ENCODE measurements at regions of chr6 and their contacts with region 1.

Region 1: DNA sequence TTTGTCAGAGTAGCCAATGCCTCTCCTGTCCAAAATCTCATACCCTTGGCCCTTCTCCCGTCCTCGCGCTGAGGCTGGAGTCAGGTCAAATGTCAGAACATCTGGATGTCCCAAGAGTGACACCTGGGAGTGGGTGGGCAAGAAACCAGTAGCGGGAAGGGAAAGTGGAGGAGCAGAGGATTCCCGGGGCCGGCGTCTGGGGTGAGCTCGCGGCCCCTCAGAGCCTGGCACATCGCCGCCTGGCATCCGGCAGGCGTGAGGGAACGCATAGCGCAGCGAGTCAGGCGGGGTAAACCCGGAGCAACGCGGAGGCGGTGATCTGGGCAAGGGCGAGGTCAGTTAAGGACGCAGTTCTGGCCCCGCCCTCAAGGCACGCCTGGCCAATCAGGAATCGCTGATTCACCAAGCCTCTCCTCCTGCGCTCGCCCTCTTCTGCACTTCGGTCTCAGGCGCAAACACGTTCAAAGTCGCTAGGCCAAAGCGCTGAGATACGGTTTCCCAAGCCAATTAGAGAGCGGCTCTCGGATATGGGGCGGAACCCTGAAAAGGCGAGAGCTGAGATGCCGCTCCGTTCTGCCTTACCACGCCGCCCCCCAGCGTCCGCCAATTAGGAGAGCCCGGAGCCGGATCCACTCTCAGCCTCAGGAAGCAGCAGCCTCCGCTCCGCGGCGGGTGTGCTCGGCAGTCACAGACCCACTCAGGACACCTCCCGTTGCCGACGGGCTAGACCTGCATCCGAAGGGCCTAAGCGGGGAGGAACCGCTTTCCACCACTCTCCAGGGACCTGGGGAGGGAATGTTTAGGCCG is 22.5 kb downstream of the VPS52 start:
- DNase-seq: peak; percentile 99
- H3K4me3 ChIP-seq: peak overlapping the region; percentile 35 to 60 (median 50)
- H3K27ac ChIP-seq: peak overlapping the region; percentile 88 to 93 (median 92)
- H3K4me1 ChIP-seq: peaks cover 12 to 27% (median 24%) of the 10 kb centered on the region in 4 donors
- H3K27me3 ChIP-seq: peaks cover 4% of the 10 kb centered on the region
- CTCF ChIP-seq: no peak
- EP300 ChIP-seq: no peak
- POLR2A ChIP-seq: peak; percentile 87

Region 2: DNA sequence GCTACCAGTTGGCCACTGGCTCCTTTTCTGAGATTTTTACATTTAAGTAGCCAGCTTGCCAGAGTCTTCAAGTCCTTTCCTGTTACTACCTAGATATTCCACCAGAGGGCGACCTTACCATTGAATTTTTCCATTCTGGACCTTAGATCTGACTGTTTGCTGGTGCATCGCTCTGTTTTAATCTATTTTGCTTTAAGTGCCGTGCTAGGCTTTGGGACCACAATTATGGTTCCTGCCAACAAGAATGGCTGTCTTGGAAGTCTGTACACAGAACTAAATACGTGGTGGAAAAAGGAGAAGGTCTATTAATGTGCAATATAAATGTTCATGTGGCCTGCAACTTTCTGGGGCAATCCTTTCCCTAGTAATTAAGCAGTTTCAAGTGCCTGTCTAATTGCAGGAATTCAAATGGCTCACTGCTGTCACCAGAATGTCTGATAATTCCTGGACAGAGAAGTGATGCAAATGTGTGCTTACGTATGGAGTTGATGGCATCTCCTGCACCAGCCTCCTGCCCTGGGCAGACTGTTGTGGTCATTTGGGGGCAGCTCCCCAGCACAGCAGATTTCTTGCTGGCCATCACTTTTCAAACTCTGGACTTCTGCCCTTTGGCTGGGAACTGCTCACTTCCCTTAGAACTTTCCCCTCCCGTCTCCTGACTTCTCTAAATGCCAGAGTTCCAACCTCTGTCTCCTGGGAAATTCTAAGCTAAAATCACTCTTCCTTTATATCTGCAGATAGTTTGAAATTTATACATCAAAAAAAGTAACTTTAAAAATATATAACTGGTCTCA is 234.1 kb before region 1 on chr6:
- in situ Hi-C with region 1: loop called (anchors 5 to 25 kb)
- intact Hi-C with region 1: loop called (anchors 10 kb)
- DNase-seq: peak; percentile 37
- H3K4me3 ChIP-seq: no peak overlapping the region
- H3K27ac ChIP-seq: no peak overlapping the region
- H3K4me1 ChIP-seq: peaks cover 0 to 24% (median 12%) of the 10 kb centered on the region in 4 donors
- H3K27me3 ChIP-seq: peaks cover 42% of the 10 kb centered on the region
- CTCF ChIP-seq: peak; percentile 77 to 89 (median 84)
- EP300 ChIP-seq: no peak
- POLR2A ChIP-seq: no peak

Region 3: GRCh38 chr6:33112148-33112547 is 137.0 kb before region 1 on chr6:
- in situ Hi-C with region 1: loop called in 1 of 4 experiments (anchors 25 kb)
- intact Hi-C with region 1: no loop called
- DNase-seq: no peak
- H3K4me3 ChIP-seq: no peak overlapping the region
- H3K27ac ChIP-seq: no peak overlapping the region
- H3K4me1 ChIP-seq: peaks cover 0 to 4% (median 2%) of the 10 kb centered on the region in 4 donors
- H3K27me3 ChIP-seq: peaks cover 68% of the 10 kb centered on the region
- CTCF ChIP-seq: no peak
- EP300 ChIP-seq: no peak
- POLR2A ChIP-seq: no peak

Region 4: DNA sequence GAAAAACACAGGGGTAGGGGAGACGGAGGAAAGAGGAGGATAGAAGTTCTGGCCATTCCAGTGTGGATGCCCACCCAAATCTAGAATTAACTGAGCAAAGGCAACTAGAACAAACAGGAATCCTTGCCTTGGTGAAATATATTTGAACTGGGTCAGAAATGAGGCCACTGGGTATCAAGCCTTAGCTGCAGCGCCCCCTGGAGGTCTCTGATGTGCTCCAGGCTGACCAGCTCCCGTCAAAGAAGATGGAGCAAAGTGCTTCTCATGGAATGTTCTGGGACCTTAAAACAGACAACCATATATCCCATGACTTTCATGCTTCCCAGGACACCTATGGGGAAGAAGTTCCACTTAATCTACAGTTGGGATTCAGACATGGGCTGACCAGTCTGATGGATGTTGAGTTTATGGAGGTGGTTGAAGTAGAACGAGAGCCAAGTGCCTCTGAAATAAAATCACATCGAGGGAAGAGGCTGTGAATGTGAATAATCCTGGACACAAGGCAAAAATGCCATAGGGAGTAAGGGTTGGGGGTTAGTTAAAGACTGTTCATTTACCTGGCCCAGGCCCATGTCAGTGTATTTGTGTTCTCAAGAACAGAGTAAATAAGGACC is 122.9 kb before region 1 on chr6:
- in situ Hi-C with region 1: loop called in 1 of 4 experiments (anchors 25 kb)
- intact Hi-C with region 1: loop called (anchors 5 kb)
- DNase-seq: peak; percentile 66
- H3K4me3 ChIP-seq: no peak overlapping the region
- H3K27ac ChIP-seq: no peak overlapping the region
- H3K4me1 ChIP-seq: no peaks in the 10 kb centered on the region
- H3K27me3 ChIP-seq: no peaks in the 10 kb centered on the region
- CTCF ChIP-seq: peak; percentile 31 to 67 (median 54)
- EP300 ChIP-seq: no peak
- POLR2A ChIP-seq: no peak

Region 5: GRCh38 chr6:33161354-33162331 is 87.5 kb before region 1 on chr6:
- in situ Hi-C with region 1: loop called in 2 of 4 experiments (anchors 10 kb)
- intact Hi-C with region 1: loop called (anchors 10 kb)
- DNase-seq: peak; percentile 85
- H3K4me3 ChIP-seq: peak overlapping the region; percentile 34 to 53 (median 38)
- H3K27ac ChIP-seq: peak overlapping the region; percentile 58 to 82 (median 74)
- H3K4me1 ChIP-seq: peaks cover 4 to 17% (median 15%) of the 10 kb centered on the region in 4 donors
- H3K27me3 ChIP-seq: no peaks in the 10 kb centered on the region
- CTCF ChIP-seq: peak; percentile 94 to 96 (median 94)
- EP300 ChIP-seq: no peak
- POLR2A ChIP-seq: no peak

Region 6: DNA sequence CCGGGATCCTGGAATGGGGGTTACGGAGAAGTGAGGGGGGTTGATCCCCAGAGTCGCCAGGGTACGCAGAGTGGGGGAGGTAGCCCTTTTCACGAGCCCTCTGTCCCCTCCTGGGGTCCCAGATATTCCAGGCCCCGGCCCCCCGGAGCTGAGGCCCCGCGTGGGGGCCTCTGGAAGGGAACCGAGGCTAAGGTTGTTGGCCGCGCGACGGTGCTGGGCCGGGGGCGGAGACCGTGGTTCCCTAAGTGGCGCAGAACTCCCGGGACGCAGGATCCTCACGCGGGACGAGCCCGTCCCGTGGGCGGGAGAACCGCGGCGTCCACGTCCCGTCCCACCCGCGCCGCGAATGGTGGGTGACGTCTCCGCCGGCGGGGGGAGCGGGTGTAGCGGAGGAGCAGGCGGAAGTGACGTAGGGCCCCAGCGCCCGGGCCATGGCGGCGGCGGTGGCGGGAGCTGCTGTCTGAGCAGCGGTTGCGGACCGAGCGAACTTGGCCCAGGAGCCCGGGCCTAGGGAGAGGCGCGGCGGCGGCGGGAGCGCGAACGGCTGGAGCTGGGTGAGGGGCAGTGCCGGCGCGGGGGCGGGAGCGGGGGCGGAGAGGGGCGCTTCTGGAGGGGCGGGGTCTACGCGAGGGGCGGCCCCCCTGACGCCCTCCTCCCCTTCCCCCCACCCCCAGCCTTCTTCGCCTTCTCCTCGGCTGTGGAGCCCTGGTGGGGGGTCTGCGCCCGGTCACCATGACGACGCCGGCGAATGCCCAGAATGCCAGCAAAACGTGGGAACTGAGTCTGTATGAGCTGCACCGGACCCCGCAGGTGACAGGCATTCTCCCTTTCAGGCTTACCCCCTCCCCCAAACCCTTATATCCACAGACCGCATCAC is 40.8 kb before region 1 on chr6 and contains the start of gene RING1:
- in situ Hi-C with region 1: no loop called
- intact Hi-C with region 1: no loop called
- DNase-seq: peak; percentile 91
- H3K4me3 ChIP-seq: peak within 1 kb of the TSS; percentile 79 to 94 (median 85)
- H3K27ac ChIP-seq: peak within 1 kb of the TSS; percentile 92 to 98 (median 94)
- H3K4me1 ChIP-seq: peaks cover 13 to 46% (median 31%) of the 10 kb centered on the region in 4 donors
- H3K27me3 ChIP-seq: peaks cover 9% of the 10 kb centered on the region
- CTCF ChIP-seq: no peak
- EP300 ChIP-seq: peak; percentile 9
- POLR2A ChIP-seq: peak; percentile 97
- total RNA-seq, gene RING1: 10.8 to 29.9 (median 19.9) TPM